Common myeloid progenitor, CD34-positive (primary cell): ENCODE measurements at regions of chr4 and their contacts with region 1.

Region 1: GRCh38 chr4:52028969-52029368 is 8.8 kb upstream of the LRRC66 start:
- DNase-seq: peak in 2 of 3 donors; percentile 4 to 22
- H3K4me3 ChIP-seq: no peak overlapping the region
- H3K27ac ChIP-seq: no peak overlapping the region
- H3K4me1 ChIP-seq: no peaks in the 10 kb centered on the region
- H3K27me3 ChIP-seq: peaks cover 0 to 2% (median 0%) of the 10 kb centered on the region in 5 experiments

Region 2: DNA sequence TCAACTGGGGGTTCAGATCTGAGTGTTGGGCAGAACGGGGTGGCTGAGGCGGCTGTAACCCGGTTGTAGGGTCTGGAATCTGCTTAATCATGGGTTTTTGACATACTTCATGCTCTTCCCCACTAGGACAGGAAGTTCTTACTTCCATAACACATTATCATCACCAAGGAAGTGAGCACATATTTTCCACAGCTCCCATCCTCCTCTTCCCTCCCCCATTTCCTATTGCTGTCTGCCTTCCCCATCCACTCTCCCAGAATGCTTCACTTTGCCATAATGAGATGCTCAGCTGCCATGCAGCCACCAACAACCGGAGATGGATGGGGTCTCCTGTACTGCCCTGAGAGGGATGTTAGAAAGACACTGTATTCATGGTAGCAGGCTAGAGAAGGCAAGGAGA is 192.4 kb before region 1 on chr4:
- CTCF ChIA-PET with region 1: interaction called, 12 read pairs
- POLR2A ChIA-PET with region 1: no interaction called
- DNase-seq: no peak
- H3K4me3 ChIP-seq: no peak overlapping the region
- H3K27ac ChIP-seq: no peak overlapping the region
- H3K4me1 ChIP-seq: no peaks in the 10 kb centered on the region
- H3K27me3 ChIP-seq: peaks cover 0 to 5% (median 0%) of the 10 kb centered on the region in 5 experiments

Region 3: DNA sequence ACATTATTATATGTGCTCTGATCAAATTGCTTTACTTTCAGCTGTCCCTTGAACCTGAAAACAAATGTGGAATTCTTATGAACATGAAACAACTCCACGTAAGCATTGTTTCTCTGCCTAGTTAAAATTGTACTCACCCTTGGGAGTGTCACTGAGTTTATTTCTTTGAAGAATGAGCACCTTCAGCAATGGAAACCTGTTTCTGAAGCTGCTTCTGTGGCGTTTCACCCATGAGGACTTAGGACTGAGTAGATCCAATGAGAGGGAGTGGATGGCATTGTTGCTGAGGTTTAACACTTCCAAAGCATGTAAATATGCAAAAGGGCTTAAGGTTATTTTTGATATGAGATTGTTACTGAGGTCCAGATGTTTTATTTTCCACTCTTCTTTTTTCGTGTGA is 12.0 kb before region 1 on chr4:
- CTCF ChIA-PET with region 1: no interaction called
- POLR2A ChIA-PET with region 1: no interaction called
- DNase-seq: no peak
- H3K4me3 ChIP-seq: no peak overlapping the region
- H3K27ac ChIP-seq: no peak overlapping the region
- H3K4me1 ChIP-seq: peaks cover 0 to 7% (median 6%) of the 10 kb centered on the region in 4 experiments
- H3K27me3 ChIP-seq: no peaks in the 10 kb centered on the region

Region 4: GRCh38 chr4:52051619-52052474 is 22.9 kb after region 1 on chr4:
- CTCF ChIA-PET with region 1: no interaction called
- POLR2A ChIA-PET with region 1: no interaction called
- DNase-seq: peak; percentile 25 to 64 (median 39)
- H3K4me3 ChIP-seq: peak overlapping the region; percentile 29 to 76 (median 64)
- H3K27ac ChIP-seq: no peak overlapping the region
- H3K4me1 ChIP-seq: peaks cover 0 to 19% (median 16%) of the 10 kb centered on the region in 4 experiments
- H3K27me3 ChIP-seq: peaks cover 25 to 80% (median 28%) of the 10 kb centered on the region in 5 experiments